Spleen (tissue), 13 donors: ENCODE measurements at regions of chr12 and their contacts with region 1.

Region 1: GRCh38 chr12:47422611-47423010 is 283.2 kb downstream of the RPAP3 start:
- DNase-seq: no peak
- H3K4me3 ChIP-seq: no peak overlapping the region
- H3K27ac ChIP-seq: no peak overlapping the region
- H3K4me1 ChIP-seq: no peaks in the 10 kb centered on the region
- H3K27me3 ChIP-seq: no peaks in the 10 kb centered on the region
- CTCF ChIP-seq: no peak
- POLR2A ChIP-seq: no peak

Region 2: GRCh38 chr12:46332260-46332659 is 1090.4 kb before region 1 on chr12:
- intact Hi-C with region 1: loop called (anchors 10 kb)
- DNase-seq: no peak
- H3K4me3 ChIP-seq: no peak overlapping the region
- H3K27ac ChIP-seq: no peak overlapping the region
- H3K4me1 ChIP-seq: no peaks in the 10 kb centered on the region
- H3K27me3 ChIP-seq: no peaks in the 10 kb centered on the region
- CTCF ChIP-seq: no peak
- POLR2A ChIP-seq: no peak